ENCODE measurements at regions of chr20 and their contacts with region 1.

Region 1: GRCh38 chr20:53967527-53967926 is 102.9 kb downstream of the BCAS1 start:
- DNase-seq: no peak
- ATAC-seq: no peak

Region 2: DNA sequence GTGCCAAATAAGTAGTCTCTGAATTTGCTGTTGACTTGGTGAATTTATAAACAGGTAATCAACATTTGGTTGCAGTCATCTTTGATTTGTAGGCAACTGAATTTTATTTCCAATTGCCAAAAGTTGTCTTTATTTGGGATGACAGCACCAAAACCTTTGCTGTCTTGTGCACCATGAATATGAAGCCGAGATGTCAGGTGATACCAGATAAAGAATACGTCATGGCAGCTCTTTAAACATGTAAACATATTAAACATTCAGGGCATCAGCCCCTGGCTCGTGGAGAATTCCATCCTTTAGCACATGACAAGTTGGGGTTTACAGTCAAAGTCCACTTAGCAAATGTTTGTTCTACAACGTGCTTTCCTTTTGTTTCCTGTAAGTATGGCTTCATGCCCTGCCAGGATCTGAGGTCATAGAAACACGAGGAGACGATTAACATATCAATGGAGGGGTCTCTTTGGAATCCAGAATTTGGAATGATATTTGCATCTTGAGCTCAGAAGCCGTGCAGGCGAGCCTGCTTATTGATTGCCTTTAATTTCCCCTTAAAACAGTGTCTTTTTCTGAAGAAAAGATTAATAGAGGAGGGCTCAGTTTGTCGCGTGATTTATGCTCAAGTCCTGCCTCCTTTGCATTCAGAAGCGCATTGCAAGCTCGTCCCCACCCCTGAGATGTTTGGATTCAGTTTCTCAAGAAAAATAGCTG is 203.7 kb before region 1 on chr20:
- intact Hi-C with region 1: no loop called
- DNase-seq: no peak
- ATAC-seq: no peak

Region 3: GRCh38 chr20:53947501-53948195 is 19.9 kb before region 1 on chr20:
- intact Hi-C with region 1: loop called (anchors 2 kb)
- DNase-seq: no peak
- ATAC-seq: no peak

Measured in sciatic nerve (tissue), 2 donors.